ENCODE measurements at regions of chr3 and their contacts with region 1.

Region 1: GRCh38 chr3:71389911-71390573 is 193.5 kb downstream of the FOXP1 start:
- DNase-seq: peak in 2 of 3 donors; percentile 21 to 34
- H3K4me3 ChIP-seq: peak overlapping the region in 2 of 3 experiments; percentile 15 to 53
- H3K4me3 Mint-ChIP-seq: peak overlapping the region; percentile 60 to 75
- H3K27ac ChIP-seq: peak overlapping the region; percentile 50 to 86
- H3K27ac Mint-ChIP-seq: peak overlapping the region; percentile 82 to 90 (median 87)
- H3K4me1 ChIP-seq: peaks cover 57 to 63% of the 10 kb centered on the region in 2 donors
- H3K4me1 Mint-ChIP-seq: peaks cover 64% of the 10 kb centered on the region
- H3K27me3 ChIP-seq: no peaks in the 10 kb centered on the region
- H3K27me3 Mint-ChIP-seq: peaks cover 0 to 2% (median 0%) of the 10 kb centered on the region in 3 donors
- CTCF ChIP-seq: no peak

Region 2: DNA sequence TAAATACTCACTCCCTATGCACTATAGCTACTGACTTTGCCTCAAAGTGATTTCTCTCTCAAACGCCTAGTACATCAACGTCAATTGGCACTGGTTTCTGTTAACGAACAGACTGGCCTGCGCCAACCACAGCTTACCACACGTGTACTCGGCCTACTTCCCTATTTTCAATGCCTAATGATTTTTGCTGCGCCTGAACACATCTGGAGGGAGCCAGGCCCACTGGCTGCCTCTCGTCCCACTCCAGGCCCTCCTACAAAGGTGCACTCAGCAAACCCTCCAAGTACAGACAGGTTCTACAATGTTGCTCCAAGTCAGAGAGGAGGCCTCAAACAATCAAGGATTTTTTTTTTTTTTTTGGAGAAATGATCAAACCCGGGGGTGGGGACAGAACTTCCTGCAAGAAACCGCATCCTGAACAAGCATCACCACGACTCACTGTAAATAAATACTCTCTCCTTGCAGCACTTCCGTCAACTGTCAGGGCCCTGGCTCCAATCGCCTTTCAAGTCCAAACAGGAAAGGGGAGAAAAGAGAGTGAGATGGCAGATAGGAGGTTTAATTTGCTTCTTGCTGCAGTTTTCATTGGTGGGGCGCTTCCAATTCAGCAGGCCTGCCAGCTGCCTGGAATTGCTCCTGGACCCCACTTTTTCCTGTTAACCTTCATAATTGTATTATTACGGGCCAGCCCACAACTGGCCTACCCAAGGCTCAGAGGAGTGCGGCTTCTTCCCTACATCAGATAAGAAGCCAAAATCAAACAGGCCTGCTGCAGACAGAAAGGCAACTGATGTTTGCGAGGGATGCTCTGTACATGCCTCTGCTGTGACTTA is 54.2 kb after region 1 on chr3:
- intact Hi-C with region 1: loop called (anchors 5 kb)
- DNase-seq: peak; percentile 83 to 91 (median 87)
- H3K4me3 ChIP-seq: peak overlapping the region in 1 of 3 experiments; percentile 55
- H3K4me3 Mint-ChIP-seq: peak overlapping the region; percentile 65 to 79
- H3K27ac ChIP-seq: peak overlapping the region; percentile 80 to 93
- H3K27ac Mint-ChIP-seq: peak overlapping the region; percentile 98 to 100 (median 99)
- H3K4me1 ChIP-seq: peaks cover 96 to 97% of the 10 kb centered on the region in 2 donors
- H3K4me1 Mint-ChIP-seq: peaks cover 95% of the 10 kb centered on the region
- H3K27me3 ChIP-seq: no peaks in the 10 kb centered on the region
- H3K27me3 Mint-ChIP-seq: peaks cover 0 to 2% (median 0%) of the 10 kb centered on the region in 3 donors
- CTCF ChIP-seq: no peak

Region 3: DNA sequence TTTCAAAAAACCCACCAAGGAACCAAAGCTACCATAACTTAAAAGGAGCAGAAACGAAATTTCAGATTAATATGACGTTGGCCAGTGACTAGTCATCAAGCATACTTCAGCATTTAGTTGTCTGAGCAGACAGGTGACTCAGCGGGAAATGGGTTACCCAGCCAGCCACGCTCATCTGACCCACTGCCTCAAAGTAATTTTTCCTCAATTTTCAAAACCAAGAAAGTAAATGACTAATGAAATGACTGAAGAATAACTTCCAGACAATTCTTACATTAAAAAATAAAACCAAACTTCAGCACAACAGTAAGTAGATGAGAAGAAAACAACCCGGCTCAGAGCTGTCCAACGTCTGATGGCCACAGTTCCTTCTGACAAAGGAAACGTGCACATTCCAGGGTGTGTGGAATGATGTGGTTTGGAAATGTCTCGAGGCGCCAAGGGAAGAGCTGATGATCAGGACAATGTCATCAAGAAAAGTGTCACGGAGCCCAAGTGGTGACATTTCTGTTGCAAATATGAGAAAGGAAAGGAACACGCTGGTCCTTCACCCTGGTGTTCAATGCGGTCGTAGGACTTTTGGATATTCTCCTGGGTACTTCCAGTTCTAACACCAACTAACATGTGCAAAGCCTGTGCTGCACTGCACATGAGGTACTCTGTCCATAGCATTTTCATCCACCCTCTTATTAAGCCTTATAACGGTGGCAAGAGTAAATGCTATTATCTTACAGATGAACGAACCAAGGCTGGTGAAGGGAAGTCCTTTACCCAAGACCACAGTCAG is 114.4 kb after region 1 on chr3:
- intact Hi-C with region 1: loop called in 1 of 2 experiments (anchors 5 kb)
- DNase-seq: peak; percentile 75 to 90 (median 88)
- H3K4me3 ChIP-seq: no peak overlapping the region
- H3K4me3 Mint-ChIP-seq: peak overlapping the region in 1 of 2 donors; percentile 47
- H3K27ac ChIP-seq: peak overlapping the region in 1 of 2 donors; percentile 76
- H3K27ac Mint-ChIP-seq: peak overlapping the region; percentile 78 to 93 (median 86)
- H3K4me1 ChIP-seq: peaks cover 16 to 27% of the 10 kb centered on the region in 2 donors
- H3K4me1 Mint-ChIP-seq: peaks cover 34% of the 10 kb centered on the region
- H3K27me3 ChIP-seq: no peaks in the 10 kb centered on the region
- H3K27me3 Mint-ChIP-seq: no peaks in the 10 kb centered on the region
- CTCF ChIP-seq: no peak

Measured in CD14-positive monocyte (primary cell).